ENCODE measurements at regions of chr7 and their contacts with region 1.

Region 1: GRCh38 chr7:39746103-39746819 is 122.9 kb downstream of the RALA start:
- DNase-seq: peak; percentile 76
- CTCF ChIP-seq: peak; percentile 83

Region 2: GRCh38 chr7:39732837-39733804 is 13.1 kb before region 1 on chr7:
- CTCF ChIA-PET with region 1: interaction called, 78 read pairs
- POLR2A ChIA-PET with region 1: no interaction called
- DNase-seq: peak; percentile 96
- CTCF ChIP-seq: no peak

Region 3: DNA sequence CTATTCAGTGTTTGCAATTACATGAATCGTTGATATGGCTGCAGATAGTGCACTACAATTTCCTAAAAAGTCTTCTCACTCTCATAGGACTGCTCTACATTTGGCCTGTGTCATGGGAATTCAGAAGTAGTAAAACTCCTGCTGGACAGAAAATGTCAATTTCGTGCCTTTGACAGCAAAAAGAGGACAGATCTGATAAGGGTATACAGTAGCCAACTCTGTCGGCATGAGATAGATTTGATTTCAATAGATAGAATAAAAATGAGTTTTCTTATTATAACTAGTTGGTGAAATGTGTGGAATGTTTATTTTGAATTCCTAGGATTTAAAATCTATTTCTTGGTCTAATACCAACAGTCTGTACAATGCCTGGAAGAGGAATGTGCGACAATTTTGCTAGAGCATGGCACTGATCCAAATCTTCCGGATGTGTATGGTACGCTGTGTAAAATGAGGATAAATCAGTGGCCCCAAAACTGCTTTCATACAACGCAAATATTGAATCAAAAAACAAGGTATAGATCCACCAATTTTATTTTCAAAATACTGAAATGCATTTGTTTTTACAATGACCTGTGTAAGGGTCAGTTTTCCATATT is 70.3 kb after region 1 on chr7:
- CTCF ChIA-PET with region 1: no interaction called
- POLR2A ChIA-PET with region 1: no interaction called
- DNase-seq: no peak
- CTCF ChIP-seq: no peak

Region 4: GRCh38 chr7:39927018-39927417 is 180.8 kb after region 1 on chr7:
- CTCF ChIA-PET with region 1: no interaction called
- POLR2A ChIA-PET with region 1: no interaction called
- DNase-seq: no peak
- CTCF ChIP-seq: no peak

Measured in GM10248 (cell line).